ENCODE measurements at regions of chr7 and their contacts with region 1.

Region 1: DNA sequence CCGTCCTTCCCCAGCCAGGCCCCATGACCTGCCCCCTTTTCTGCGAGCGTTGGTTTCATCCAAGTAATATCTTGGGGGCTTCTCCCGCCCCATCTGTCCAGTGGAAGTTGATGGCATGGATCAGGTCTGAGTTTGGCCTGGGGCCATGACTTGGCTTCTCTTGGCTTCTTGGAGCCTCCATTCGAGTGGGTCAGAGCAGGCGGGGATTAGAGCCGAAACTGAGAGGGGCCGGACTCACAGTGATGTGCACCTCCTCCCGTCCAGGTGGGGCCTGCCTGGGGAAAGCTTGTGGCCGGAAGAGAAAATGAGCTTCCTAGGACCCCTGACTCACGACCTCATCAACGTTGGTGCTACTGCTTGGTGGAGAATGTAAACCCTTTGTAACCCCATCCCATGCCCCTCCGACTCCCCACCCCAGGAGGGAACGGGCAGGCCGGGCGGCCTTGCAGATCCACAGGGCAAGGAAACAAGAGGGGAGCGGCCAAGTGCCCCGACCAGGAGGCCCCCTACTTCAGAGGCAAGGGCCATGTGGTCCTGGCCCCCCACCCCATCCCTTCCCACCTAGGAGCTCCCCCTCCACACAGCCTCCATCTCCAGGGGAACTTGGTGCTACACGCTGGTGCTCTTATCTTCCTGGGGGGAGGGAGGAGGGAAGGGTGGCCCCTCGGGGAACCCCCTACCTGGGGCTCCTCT is 15.1 kb upstream of the LIMK1 start:
- DNase-seq: no peak
- CTCF ChIP-seq: no peak

Region 2: GRCh38 chr7:74083117-74083876 is 14.8 kb after region 1 on chr7 and contains the start of gene LIMK1:
- CTCF ChIA-PET with region 1: interaction called, 32 read pairs
- POLR2A ChIA-PET with region 1: no interaction called
- DNase-seq: peak; percentile 98
- CTCF ChIP-seq: no peak

Measured in GM10248 (cell line).